Heart right ventricle (tissue), 16 donors: ENCODE measurements at regions of chr5 and their contacts with region 1.

Region 1: GRCh38 chr5:42994246-42995151 is 45.6 kb downstream of the ANXA2R start:
- DNase-seq: peak; percentile 80 to 93
- ATAC-seq: peak; percentile 62 to 84 (median 80)
- H3K4me3 ChIP-seq: peak overlapping the region; percentile 53 to 76 (median 64)
- H3K27ac ChIP-seq: peak overlapping the region; percentile 66 to 100 (median 96)
- H3K4me1 ChIP-seq: peaks cover 0 to 63% (median 16%) of the 10 kb centered on the region in 9 donors
- H3K27me3 ChIP-seq: peaks cover 0 to 100% (median 91%) of the 10 kb centered on the region in 7 donors
- CTCF ChIP-seq: peak; percentile 69 to 90 (median 86)

Region 2: GRCh38 chr5:42950440-42951292 is 43.8 kb before region 1 on chr5:
- intact Hi-C with region 1: loop called in 9 of 10 experiments (anchors 1 to 10 kb)
- DNase-seq: peak; percentile 29 to 81
- ATAC-seq: peak; percentile 82 to 92 (median 86)
- H3K4me3 ChIP-seq: peak overlapping the region; percentile 32 to 74 (median 60)
- H3K27ac ChIP-seq: peak overlapping the region; percentile 78 to 99 (median 94)
- H3K4me1 ChIP-seq: peaks cover 0 to 50% (median 25%) of the 10 kb centered on the region in 9 donors
- H3K27me3 ChIP-seq: peaks cover 12 to 99% (median 89%) of the 10 kb centered on the region in 7 donors
- CTCF ChIP-seq: no peak

Region 3: DNA sequence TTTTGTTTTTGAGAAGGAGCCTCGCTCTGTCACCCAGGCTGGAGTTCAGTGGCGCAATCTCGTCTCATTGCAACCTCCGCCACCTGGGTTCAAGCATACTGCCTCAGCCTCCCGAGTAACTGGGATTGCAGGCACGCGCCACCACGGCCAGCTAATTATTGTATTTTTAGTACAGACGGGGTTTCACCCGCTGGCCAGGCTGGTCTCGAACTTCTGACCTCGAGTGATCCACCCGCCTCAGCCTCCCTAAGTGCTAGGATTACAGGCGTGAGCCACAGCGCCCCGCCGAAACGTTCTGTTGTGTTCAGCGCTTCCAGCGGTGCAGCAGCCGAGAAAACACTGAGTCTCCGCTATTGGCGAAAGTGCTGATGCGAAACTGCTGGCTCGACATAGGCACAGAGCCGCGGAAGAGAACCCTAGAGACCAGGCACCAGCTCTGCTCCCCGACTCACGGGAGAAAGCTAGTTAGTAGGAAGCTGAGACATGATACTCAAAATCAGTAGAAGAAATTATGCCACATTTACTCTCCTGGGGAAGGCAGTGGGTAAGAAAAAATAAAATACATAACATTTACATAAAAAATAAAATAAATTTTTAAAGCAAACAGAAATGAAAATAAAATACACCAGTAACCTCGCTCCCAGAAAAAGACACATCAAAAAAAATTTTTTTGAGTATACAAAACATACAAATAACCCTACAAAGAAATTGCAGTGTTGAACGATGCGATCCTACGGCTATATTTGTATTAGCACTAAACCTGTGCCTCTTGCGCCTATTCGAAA is 14.1 kb after region 1 on chr5:
- intact Hi-C with region 1: loop called in 2 of 10 experiments (anchors 1 to 2 kb)
- DNase-seq: peak; percentile 85 to 92
- ATAC-seq: peak; percentile 81 to 93 (median 88)
- H3K4me3 ChIP-seq: peak overlapping the region; percentile 34 to 67 (median 55)
- H3K27ac ChIP-seq: peak overlapping the region; percentile 72 to 97 (median 90)
- H3K4me1 ChIP-seq: peaks cover 0 to 43% (median 10%) of the 10 kb centered on the region in 9 donors
- H3K27me3 ChIP-seq: peaks cover 0 to 74% (median 57%) of the 10 kb centered on the region in 7 donors
- CTCF ChIP-seq: peak in 1 of 9 donors; percentile 17